ENCODE measurements at regions of chr6 and their contacts with region 1.

Region 1: DNA sequence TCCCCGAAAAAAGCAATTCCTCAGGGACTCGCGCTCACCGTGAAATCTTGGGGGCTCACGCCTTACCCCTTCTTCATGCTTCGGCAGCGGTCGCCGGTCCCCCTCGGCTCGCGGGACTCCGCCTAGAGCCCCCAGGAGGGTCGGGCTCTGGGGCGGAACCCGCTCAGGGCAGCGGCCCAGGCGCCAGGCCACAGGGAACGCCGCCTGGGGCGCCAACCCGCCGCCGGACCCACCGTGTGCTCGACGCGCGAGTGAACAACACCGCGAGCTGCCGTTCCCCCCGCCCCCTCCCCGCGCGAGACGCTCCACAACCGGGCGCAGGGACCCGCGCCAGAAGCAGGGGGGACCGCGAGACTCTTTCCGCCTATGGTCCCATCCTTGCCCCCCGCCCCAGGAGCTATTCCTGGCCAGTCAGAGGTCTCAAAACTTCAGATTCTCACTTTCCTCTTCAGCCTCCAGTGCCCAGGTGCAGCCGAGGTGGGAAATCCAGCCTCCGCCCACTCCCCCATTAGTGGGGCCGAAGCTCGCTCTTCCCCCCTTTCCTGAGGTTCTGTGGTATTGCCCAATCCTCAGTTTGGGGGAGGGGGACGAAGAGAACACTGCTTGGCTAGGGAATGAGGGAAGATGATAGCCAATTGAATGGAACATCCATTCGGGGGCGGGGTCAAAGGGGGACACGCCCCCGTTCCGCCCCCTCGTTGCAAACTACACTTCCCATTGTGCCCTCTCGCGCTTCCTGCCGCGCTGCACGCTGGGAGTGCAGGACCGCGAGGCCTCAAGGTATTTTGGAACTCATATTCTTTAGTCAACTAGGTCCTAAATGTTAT is at the start of gene WASF1:
- DNase-seq: peak; percentile 93
- H3K4me3 Mint-ChIP-seq: no peak within 1 kb of the TSS
- H3K27ac Mint-ChIP-seq: peak within 1 kb of the TSS; percentile 33
- H3K4me1 Mint-ChIP-seq: peaks cover 5% of the 10 kb centered on the region
- H3K27me3 Mint-ChIP-seq: peaks cover 7% of the 10 kb centered on the region
- total RNA-seq, gene WASF1: 1.3 to 1.5 TPM

Region 2: GRCh38 chr6:109095027-109095834 is 1084.4 kb before region 1 on chr6 and contains the start of gene CEP57L1:
- CTCF ChIA-PET with region 1: no interaction called
- intact Hi-C with region 1: loop called (anchors 1 kb)
- DNase-seq: peak; percentile 97
- H3K4me3 Mint-ChIP-seq: peak within 1 kb of the TSS; percentile 84
- H3K27ac Mint-ChIP-seq: peak within 1 kb of the TSS; percentile 95
- H3K4me1 Mint-ChIP-seq: peaks cover 38% of the 10 kb centered on the region
- H3K27me3 Mint-ChIP-seq: no peaks in the 10 kb centered on the region
- total RNA-seq, gene CEP57L1: 33.3 to 33.5 TPM

Region 3: DNA sequence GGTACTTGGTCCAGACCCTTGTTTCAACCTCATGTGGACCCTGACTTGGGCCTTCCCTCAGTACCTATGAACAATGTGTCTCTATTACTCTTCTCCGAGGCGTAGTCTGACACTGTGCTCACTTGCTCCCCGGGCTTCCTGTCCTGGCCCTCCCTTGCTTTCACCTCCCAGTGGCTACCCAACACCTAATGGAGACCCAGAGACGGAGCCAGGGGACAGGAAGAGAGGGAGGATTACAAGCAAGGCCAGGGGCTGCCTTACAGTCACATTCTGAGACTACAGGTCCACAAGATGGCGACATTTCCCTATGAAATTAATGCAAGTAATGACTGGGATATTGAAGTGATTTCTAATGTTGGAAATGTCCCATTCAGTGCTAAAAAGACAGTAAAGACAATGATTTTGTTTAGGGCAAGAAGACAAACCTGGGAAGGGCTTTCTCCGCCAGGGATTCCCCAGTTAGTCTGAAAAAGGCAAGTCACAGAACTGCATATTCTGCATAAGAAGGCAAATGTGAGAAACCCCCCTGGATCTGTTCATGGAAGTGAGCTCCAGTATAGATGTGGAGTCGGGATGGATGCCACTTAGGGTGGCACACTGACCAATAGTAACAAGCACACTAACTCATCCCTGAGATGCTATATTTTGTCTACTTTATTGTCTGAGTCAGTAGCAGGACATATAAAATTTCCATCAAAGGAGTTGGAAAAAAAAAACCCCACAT is 652.5 kb before region 1 on chr6:
- CTCF ChIA-PET with region 1: no interaction called
- intact Hi-C with region 1: loop called (anchors 5 kb)
- DNase-seq: peak; percentile 70
- H3K4me3 Mint-ChIP-seq: no peak overlapping the region
- H3K27ac Mint-ChIP-seq: no peak overlapping the region
- H3K4me1 Mint-ChIP-seq: peaks cover 2% of the 10 kb centered on the region
- H3K27me3 Mint-ChIP-seq: no peaks in the 10 kb centered on the region

Region 4: GRCh38 chr6:110233770-110234374 is 54.3 kb after region 1 on chr6:
- CTCF ChIA-PET with region 1: interaction called, 3 read pairs
- intact Hi-C with region 1: loop called (anchors 1 kb)
- DNase-seq: peak; percentile 5
- H3K4me3 Mint-ChIP-seq: no peak overlapping the region
- H3K27ac Mint-ChIP-seq: no peak overlapping the region
- H3K4me1 Mint-ChIP-seq: peaks cover 12% of the 10 kb centered on the region
- H3K27me3 Mint-ChIP-seq: no peaks in the 10 kb centered on the region

Region 5: GRCh38 chr6:110432285-110432900 is 252.8 kb after region 1 on chr6:
- CTCF ChIA-PET with region 1: no interaction called
- intact Hi-C with region 1: no loop called
- DNase-seq: no peak
- H3K4me3 Mint-ChIP-seq: no peak overlapping the region
- H3K27ac Mint-ChIP-seq: no peak overlapping the region
- H3K4me1 Mint-ChIP-seq: no peaks in the 10 kb centered on the region
- H3K27me3 Mint-ChIP-seq: peaks cover 11% of the 10 kb centered on the region

Region 6: GRCh38 chr6:110491644-110492317 is 312.2 kb after region 1 on chr6:
- CTCF ChIA-PET with region 1: no interaction called
- intact Hi-C with region 1: no loop called
- DNase-seq: no peak
- H3K4me3 Mint-ChIP-seq: no peak overlapping the region
- H3K27ac Mint-ChIP-seq: no peak overlapping the region
- H3K4me1 Mint-ChIP-seq: peaks cover 7% of the 10 kb centered on the region
- H3K27me3 Mint-ChIP-seq: peaks cover 14% of the 10 kb centered on the region

Region 7: DNA sequence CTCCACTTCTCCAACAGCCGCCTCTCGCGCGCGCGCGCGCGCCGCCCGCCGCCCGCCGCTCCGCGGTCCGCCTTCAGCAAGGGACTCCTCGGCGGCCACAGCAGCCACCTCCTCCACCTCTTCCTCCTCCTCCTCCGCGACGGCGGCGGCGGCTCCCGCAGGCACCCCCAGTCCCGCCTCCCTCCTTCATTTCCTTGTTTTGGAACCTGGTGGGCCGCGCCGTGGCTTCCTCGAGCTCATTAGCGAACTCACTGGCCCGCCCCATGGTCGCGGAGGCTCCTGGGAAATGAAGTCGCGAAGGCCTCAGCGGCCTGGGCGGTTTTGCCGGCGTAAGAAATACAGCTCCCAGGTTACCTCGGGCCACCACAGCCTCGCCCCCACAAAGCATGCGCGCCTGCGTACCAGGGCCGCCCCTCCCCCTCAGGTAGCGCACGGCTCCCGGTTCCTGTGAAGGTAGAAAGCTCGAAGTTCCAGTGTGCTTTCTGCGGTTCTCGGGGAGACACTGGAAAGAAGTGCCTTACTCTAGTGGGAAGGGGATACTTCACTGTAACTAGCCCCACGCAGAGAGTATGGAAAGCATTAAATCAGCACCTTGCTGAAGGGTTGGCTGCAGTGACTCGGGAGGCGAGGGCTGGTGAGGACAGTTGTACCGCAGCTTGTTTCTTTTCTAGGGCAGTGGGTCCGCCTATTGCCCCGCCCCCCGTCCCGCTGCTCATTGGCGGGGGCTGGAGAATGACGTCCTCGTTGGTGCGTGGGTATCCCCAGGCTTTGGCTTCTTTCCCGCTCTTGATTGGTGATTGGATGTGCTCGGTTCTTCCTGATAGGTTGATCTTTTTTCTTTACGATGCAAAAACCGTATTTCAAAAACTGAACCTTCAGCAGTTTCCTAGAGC is 635.8 kb after region 1 on chr6 and contains the start of gene CDK19:
- CTCF ChIA-PET with region 1: no interaction called
- intact Hi-C with region 1: loop called (anchors 1 kb)
- DNase-seq: peak; percentile 99
- H3K4me3 Mint-ChIP-seq: peak within 1 kb of the TSS; percentile 100
- H3K27ac Mint-ChIP-seq: peak within 1 kb of the TSS; percentile 95
- H3K4me1 Mint-ChIP-seq: peaks cover 19% of the 10 kb centered on the region
- H3K27me3 Mint-ChIP-seq: no peaks in the 10 kb centered on the region
- total RNA-seq, gene CDK19: 11.0 to 11.7 TPM

Region 8: DNA sequence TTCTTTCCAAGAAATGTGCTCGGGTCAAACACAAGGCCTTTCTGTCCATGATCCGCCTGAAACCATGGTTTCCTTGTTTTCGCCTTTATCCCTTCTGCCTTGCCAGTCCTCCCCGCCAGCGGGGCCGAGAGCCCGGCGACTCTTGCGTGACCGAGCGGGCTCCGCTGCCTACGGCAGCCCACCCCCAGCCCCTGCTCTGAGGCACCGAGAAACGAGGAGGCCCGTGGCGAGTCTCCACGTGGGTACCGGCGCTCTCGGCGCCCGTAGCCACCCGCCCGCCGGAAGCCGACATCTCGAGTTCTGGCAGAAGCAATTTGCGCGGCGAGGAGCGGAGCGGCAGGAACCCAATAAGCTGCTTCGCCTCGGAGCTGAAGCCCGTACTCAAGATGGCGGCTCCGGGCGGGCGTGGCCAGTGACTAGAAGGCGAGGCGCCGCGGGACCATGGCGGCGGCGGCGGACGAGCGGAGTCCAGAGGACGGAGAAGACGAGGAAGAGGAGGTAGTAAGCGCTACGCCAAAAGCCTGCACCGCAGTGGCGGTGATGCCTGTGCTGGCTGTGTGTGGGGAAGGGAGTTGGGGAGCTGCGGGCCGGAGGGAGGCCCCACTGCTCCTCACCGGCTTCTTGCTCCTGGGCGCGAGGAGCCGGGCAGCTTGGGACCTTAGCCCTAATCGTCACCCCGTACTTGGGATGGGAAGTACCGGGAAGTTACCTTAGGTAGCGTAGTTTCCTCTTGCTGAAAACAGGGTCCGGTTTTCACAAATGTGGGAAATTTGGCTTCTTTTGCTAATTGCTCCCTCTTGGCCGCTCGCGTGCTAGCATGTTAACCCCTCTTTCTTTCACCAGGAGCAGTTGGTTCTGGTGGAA is 778.9 kb after region 1 on chr6 and contains the start of gene GTF3C6:
- CTCF ChIA-PET with region 1: no interaction called
- intact Hi-C with region 1: loop called (anchors 1 kb)
- DNase-seq: peak; percentile 94
- H3K4me3 Mint-ChIP-seq: peak within 1 kb of the TSS; percentile 94
- H3K27ac Mint-ChIP-seq: peak within 1 kb of the TSS; percentile 96
- H3K4me1 Mint-ChIP-seq: peaks cover 14% of the 10 kb centered on the region
- H3K27me3 Mint-ChIP-seq: no peaks in the 10 kb centered on the region
- total RNA-seq, gene GTF3C6: 81.6 to 84.7 TPM